CD4-positive, alpha-beta memory T cell (primary cell): ENCODE measurements at regions of chr18 and their contacts with region 1.

Region 1: GRCh38 chr18:2240311-2240705 is 331.0 kb downstream of the METTL4 start:
- DNase-seq: no peak
- H3K4me3 ChIP-seq: no peak overlapping the region
- H3K4me3 Mint-ChIP-seq: no peak overlapping the region
- H3K27ac ChIP-seq: no peak overlapping the region
- H3K27ac Mint-ChIP-seq: no peak overlapping the region
- H3K4me1 ChIP-seq: no peaks in the 10 kb centered on the region
- H3K4me1 Mint-ChIP-seq: no peaks in the 10 kb centered on the region
- H3K27me3 ChIP-seq: no peaks in the 10 kb centered on the region
- H3K27me3 Mint-ChIP-seq: peaks cover 11 to 16% of the 10 kb centered on the region in 2 donors

Region 2: DNA sequence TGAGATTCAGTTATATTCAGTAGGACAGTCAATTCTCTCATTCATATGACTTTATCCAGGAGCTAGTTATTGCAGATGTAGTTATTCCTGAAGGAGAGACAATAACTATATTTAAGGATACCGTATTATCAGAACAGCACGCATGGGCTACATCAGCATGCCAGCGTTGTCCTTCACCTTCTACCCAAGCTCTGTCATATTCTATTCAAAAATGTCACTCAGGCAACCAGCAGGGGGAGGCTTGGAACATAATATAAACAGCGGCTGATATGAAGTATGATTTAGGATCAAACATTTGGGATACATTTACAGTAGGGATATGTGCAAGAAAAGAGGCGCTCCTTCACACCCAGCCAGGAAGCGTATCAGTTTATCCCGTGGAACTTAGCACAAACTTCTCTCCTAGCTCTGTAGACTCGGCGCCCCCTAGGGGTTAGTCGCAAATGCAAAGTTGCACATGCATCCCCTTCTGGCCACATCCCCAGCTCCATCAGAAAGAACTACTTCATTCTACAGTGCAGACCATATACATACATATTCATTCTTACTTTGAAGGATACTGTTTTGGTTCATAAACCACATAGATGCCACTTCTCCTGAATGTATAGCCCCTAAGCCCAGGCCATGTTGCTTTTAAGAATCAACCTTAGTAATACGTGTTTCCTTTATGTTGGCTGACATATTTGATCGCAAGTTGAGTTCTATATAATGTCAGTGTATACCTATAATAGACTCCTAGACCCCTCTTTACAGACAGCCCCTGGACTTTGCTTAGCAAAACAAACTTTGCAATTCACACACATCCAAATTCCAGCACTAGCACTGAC is 576.2 kb before region 1 on chr18:
- CTCF ChIA-PET with region 1: no interaction called
- POLR2A ChIA-PET with region 1: no interaction called
- intact Hi-C with region 1: no loop called
- DNase-seq: no peak
- H3K4me3 ChIP-seq: no peak overlapping the region
- H3K4me3 Mint-ChIP-seq: no peak overlapping the region
- H3K27ac ChIP-seq: no peak overlapping the region
- H3K27ac Mint-ChIP-seq: no peak overlapping the region
- H3K4me1 ChIP-seq: no peaks in the 10 kb centered on the region
- H3K4me1 Mint-ChIP-seq: no peaks in the 10 kb centered on the region
- H3K27me3 ChIP-seq: no peaks in the 10 kb centered on the region
- H3K27me3 Mint-ChIP-seq: no peaks in the 10 kb centered on the region

Region 3: DNA sequence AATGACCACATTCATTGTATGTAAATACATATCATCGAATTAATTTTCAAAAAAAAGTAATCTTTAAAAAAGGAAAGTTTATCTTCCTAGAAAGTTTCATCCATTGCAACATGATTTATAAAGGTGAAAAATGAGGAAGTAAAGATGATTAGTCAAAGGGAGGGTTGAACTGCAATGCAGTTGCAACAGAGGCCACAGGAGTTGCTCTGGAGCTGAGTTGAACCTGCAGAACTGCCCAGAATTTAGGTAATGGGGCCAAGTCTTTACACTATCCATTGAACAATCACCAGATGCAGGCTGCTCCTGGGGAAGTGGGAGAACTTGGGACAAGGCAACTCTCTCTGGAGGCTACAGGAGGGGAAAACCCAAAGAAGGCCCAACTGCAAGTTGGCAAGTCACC is 59.7 kb before region 1 on chr18:
- CTCF ChIA-PET with region 1: no interaction called
- POLR2A ChIA-PET with region 1: no interaction called
- intact Hi-C with region 1: loop called (anchors 10 kb)
- DNase-seq: no peak
- H3K4me3 ChIP-seq: no peak overlapping the region
- H3K4me3 Mint-ChIP-seq: no peak overlapping the region
- H3K27ac ChIP-seq: no peak overlapping the region
- H3K27ac Mint-ChIP-seq: no peak overlapping the region
- H3K4me1 ChIP-seq: no peaks in the 10 kb centered on the region
- H3K4me1 Mint-ChIP-seq: peaks cover 0 to 3% (median 0%) of the 10 kb centered on the region in 4 donors
- H3K27me3 ChIP-seq: no peaks in the 10 kb centered on the region
- H3K27me3 Mint-ChIP-seq: peaks cover 11% of the 10 kb centered on the region in 2 donors

Region 4: DNA sequence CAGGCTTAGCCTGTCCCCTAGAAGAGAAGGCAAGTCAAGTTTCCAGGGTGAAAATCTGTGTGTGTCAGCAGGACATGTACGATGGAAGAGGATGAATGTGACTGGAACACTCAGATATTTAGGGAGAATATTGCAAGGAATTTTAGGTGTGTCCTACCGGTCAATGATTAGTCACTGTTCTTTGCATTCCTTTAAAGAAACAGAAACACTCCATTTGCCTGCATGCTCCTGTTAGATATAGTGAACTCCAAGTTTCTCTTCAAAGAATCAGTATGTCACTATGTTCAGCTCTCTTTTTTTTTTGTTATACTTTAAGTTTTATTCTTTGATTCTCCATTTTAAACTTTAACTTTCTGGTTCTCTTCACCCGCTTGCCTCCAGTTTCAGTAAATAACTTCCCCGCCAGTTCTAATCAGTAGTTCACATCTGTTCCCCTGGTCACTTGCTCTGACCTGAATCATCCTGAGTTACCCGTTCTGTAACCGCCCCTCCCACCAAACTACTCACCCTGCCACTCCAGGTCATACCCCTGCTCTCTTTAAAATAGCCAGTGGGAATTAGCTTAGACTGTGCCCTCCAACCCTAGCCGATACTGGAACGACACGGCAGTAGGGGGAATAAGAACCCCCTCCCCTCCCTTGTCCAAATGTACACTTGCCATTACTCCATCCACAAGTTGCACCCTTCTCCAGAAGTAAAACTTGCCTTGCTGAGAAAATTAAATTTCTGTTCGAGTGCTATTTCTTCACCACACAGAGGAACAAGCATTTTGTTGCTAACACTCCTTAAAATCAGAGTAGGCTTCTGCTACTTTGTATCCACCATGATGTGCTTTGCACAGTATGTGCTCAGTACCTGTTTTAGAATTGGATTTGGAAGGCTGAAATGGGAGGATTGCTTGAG is 62.6 kb after region 1 on chr18:
- CTCF ChIA-PET with region 1: no interaction called
- POLR2A ChIA-PET with region 1: no interaction called
- intact Hi-C with region 1: no loop called
- DNase-seq: no peak
- H3K4me3 ChIP-seq: no peak overlapping the region
- H3K4me3 Mint-ChIP-seq: no peak overlapping the region
- H3K27ac ChIP-seq: no peak overlapping the region
- H3K27ac Mint-ChIP-seq: no peak overlapping the region
- H3K4me1 ChIP-seq: no peaks in the 10 kb centered on the region
- H3K4me1 Mint-ChIP-seq: no peaks in the 10 kb centered on the region
- H3K27me3 ChIP-seq: no peaks in the 10 kb centered on the region
- H3K27me3 Mint-ChIP-seq: peaks cover 3 to 7% of the 10 kb centered on the region in 2 donors